Right cardiac atrium (tissue), 5 donors: ENCODE measurements at regions of chr2 and their contacts with region 1.

Region 1: DNA sequence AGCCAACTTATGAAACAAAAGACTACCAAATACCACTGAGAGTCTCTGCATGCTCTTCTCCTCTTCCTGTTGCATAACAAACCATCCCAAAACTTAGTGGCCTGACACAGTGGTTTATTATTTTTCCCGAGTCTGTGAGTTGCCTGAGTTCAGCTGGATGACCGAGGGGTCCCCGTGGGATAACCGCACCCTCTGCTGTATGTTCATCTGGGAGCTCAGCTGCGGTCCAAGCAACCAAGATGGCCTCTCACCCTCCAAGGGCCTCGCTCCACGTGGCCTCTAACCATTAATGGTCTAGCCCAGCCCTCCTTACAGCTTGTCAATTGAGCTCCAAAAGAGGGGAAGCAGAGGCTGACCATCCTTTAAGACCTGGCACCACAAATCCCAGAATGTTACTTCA is 17.1 kb downstream of the ITM2C start:
- DNase-seq: no peak
- ATAC-seq: no peak
- H3K4me3 ChIP-seq: no peak overlapping the region
- H3K27ac ChIP-seq: no peak overlapping the region
- H3K4me1 ChIP-seq: no peaks in the 10 kb centered on the region
- H3K27me3 ChIP-seq: no peaks in the 10 kb centered on the region

Region 2: GRCh38 chr2:230347659-230348305 is 534.1 kb before region 1 on chr2:
- intact Hi-C with region 1: no loop called
- DNase-seq: no peak
- ATAC-seq: no peak
- H3K4me3 ChIP-seq: no peak overlapping the region
- H3K27ac ChIP-seq: no peak overlapping the region
- H3K4me1 ChIP-seq: peaks cover 5% of the 10 kb centered on the region
- H3K27me3 ChIP-seq: no peaks in the 10 kb centered on the region

Region 3: DNA sequence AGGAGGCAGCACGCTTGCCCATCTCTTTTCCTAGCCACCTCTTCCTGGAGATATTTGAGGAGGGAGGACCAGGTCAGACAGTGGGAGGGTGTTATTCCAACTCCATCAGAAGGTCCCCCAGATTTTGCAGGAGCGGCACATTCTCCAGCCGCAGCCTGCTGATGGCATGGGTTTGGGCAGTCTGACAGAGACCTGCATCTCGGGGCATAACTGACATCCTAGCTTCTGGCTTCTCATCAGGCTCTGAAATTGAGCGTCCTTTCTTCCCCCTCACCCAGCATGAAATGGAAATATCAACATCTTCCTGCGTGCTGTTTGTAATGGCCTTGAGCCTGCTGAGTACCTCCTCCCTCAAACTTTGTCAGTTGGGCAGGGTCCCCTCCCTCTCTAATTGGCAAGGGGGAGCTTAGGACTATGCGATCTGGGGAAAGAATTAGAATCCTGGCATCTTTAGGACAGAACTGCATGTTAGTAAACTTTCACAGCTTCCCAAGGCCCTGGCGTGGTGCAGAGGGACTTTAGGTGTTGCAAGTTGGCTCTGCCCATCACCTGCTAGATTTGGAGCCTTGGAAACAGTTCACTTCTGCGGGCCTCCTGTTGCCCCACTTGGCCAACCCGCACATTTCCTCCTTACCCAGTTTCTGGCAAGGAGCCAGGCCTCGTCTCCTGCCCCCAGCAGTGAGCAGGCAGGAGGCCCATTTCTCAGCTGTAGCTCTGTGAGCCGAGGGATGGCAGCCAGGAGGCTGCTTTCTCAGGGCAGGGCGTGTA is 14.9 kb before region 1 on chr2:
- intact Hi-C with region 1: loop called in 1 of 4 experiments (anchors 2 kb)
- DNase-seq: peak in 2 of 3 donors; percentile 39 to 68
- ATAC-seq: no peak
- H3K4me3 ChIP-seq: no peak overlapping the region
- H3K27ac ChIP-seq: no peak overlapping the region
- H3K4me1 ChIP-seq: no peaks in the 10 kb centered on the region
- H3K27me3 ChIP-seq: no peaks in the 10 kb centered on the region